Mammary epithelial cell (primary cell): ENCODE measurements at regions of chr2 and their contacts with region 1.

Region 1: GRCh38 chr2:119264781-119265692 is 41.4 kb downstream of the STEAP3 start:
- DNase-seq: peak; percentile 53
- H3K4me3 ChIP-seq: no peak overlapping the region
- H3K27ac ChIP-seq: no peak overlapping the region
- H3K4me1 ChIP-seq: no peaks in the 10 kb centered on the region
- H3K27me3 ChIP-seq: no peaks in the 10 kb centered on the region
- CTCF ChIP-seq: peak; percentile 88 to 94

Region 2: GRCh38 chr2:119218478-119219064 is 46.5 kb before region 1 on chr2:
- CTCF ChIA-PET with region 1: no interaction called
- dilution Hi-C with region 1: no loop called
- in situ Hi-C with region 1: no loop called
- intact Hi-C with region 1: loop called (anchors 1 kb)
- DNase-seq: peak; percentile 54
- H3K4me3 ChIP-seq: no peak overlapping the region
- H3K27ac ChIP-seq: no peak overlapping the region
- H3K4me1 ChIP-seq: peaks cover 21% of the 10 kb centered on the region
- H3K27me3 ChIP-seq: no peaks in the 10 kb centered on the region
- CTCF ChIP-seq: peak in 1 of 2 donors; percentile 34

Region 3: GRCh38 chr2:119234377-119235019 is 30.5 kb before region 1 on chr2:
- CTCF ChIA-PET with region 1: no interaction called
- dilution Hi-C with region 1: no loop called
- in situ Hi-C with region 1: no loop called
- intact Hi-C with region 1: loop called (anchors 1 kb)
- DNase-seq: no peak
- H3K4me3 ChIP-seq: no peak overlapping the region
- H3K27ac ChIP-seq: no peak overlapping the region
- H3K4me1 ChIP-seq: peaks cover 44% of the 10 kb centered on the region
- H3K27me3 ChIP-seq: no peaks in the 10 kb centered on the region
- CTCF ChIP-seq: peak; percentile 17 to 44

Region 4: GRCh38 chr2:119315241-119315927 is 50.3 kb after region 1 on chr2:
- CTCF ChIA-PET with region 1: no interaction called
- dilution Hi-C with region 1: no loop called
- in situ Hi-C with region 1: no loop called
- intact Hi-C with region 1: no loop called
- DNase-seq: no peak
- H3K4me3 ChIP-seq: no peak overlapping the region
- H3K27ac ChIP-seq: no peak overlapping the region
- H3K4me1 ChIP-seq: no peaks in the 10 kb centered on the region
- H3K27me3 ChIP-seq: no peaks in the 10 kb centered on the region
- CTCF ChIP-seq: no peak

Region 5: GRCh38 chr2:119338826-119339561 is 74.0 kb after region 1 on chr2:
- CTCF ChIA-PET with region 1: no interaction called
- dilution Hi-C with region 1: no loop called
- in situ Hi-C with region 1: no loop called
- intact Hi-C with region 1: no loop called
- DNase-seq: no peak
- H3K4me3 ChIP-seq: no peak overlapping the region
- H3K27ac ChIP-seq: no peak overlapping the region
- H3K4me1 ChIP-seq: no peaks in the 10 kb centered on the region
- H3K27me3 ChIP-seq: no peaks in the 10 kb centered on the region
- CTCF ChIP-seq: no peak

Region 6: GRCh38 chr2:119468154-119468955 is 203.3 kb after region 1 on chr2:
- CTCF ChIA-PET with region 1: no interaction called
- dilution Hi-C with region 1: no loop called
- in situ Hi-C with region 1: no loop called
- intact Hi-C with region 1: no loop called
- DNase-seq: no peak
- H3K4me3 ChIP-seq: no peak overlapping the region
- H3K27ac ChIP-seq: no peak overlapping the region
- H3K4me1 ChIP-seq: no peaks in the 10 kb centered on the region
- H3K27me3 ChIP-seq: no peaks in the 10 kb centered on the region
- CTCF ChIP-seq: no peak